Activated CD4-positive, alpha-beta T cell treated with anti-CD3 and anti-CD28 coated beads for 36 hours (primary cell): ENCODE measurements at regions of chr6 and their contacts with region 1.

Region 1: DNA sequence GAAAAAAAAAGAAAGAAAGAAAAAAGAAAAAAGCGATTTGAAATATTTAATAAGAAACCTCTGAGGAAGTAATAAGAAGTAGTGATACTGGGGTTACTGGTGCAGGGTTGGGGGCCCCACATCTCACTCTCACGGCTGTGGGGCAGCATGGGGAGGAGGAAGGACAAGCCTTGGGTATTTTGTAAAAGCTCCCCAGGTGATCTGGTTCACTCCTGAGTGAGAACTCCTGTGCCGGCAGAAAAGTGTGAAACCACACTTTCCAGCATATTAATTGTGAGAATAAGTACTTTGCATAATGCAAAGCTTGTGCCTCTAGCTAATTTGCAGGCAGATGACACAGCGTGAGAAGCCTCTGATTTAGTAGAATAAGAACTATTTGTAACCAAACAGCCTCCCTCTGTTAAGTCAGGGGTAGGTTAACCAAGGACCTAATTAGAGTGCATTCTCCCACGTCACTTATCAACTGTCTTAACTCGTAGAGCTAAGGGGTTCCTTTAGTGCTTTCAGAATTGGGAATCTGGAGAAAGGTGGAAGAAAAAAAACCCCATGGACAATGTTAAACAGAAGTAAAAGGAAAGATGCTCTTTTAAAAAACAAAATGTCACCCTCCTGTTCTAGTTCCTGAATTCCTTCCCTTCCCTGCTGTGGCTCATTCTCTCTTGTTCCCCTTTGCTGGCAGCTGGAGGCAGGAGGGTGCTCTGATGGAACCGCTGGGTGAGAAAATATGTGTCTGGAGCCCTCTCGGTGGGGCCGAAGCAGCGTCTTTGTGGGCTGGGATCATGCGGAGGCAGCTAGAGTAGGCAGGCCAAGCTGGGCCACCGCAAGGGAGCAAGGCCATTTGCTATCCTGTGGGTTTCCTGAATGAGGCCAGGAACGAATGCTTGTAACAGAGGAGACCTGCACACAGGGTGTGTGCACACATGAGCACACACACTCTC is 108.7 kb downstream of the FYN start:
- DNase-seq: peak; percentile 77
- ATAC-seq: peak; percentile 53
- H3K4me3 Mint-ChIP-seq: peak overlapping the region; percentile 68
- H3K27ac Mint-ChIP-seq: peak overlapping the region; percentile 99
- H3K4me1 Mint-ChIP-seq: peaks cover 99% of the 10 kb centered on the region
- H3K27me3 Mint-ChIP-seq: no peaks in the 10 kb centered on the region

Region 2: GRCh38 chr6:111642463-111643158 is 121.9 kb before region 1 on chr6:
- CTCF ChIA-PET with region 1: no interaction called
- POLR2A ChIA-PET with region 1: no interaction called
- intact Hi-C with region 1: no loop called
- DNase-seq: peak; percentile 67
- ATAC-seq: peak; percentile 80
- H3K4me3 Mint-ChIP-seq: no peak overlapping the region
- H3K27ac Mint-ChIP-seq: no peak overlapping the region
- H3K4me1 Mint-ChIP-seq: no peaks in the 10 kb centered on the region
- H3K27me3 Mint-ChIP-seq: no peaks in the 10 kb centered on the region

Region 3: GRCh38 chr6:111686249-111686931 is 78.1 kb before region 1 on chr6:
- CTCF ChIA-PET with region 1: no interaction called
- POLR2A ChIA-PET with region 1: interaction called, 10 read pairs
- intact Hi-C with region 1: no loop called
- DNase-seq: no peak
- ATAC-seq: no peak
- H3K4me3 Mint-ChIP-seq: no peak overlapping the region
- H3K27ac Mint-ChIP-seq: no peak overlapping the region
- H3K4me1 Mint-ChIP-seq: peaks cover 49% of the 10 kb centered on the region
- H3K27me3 Mint-ChIP-seq: no peaks in the 10 kb centered on the region

Region 4: GRCh38 chr6:111750753-111751684 is 13.5 kb before region 1 on chr6:
- CTCF ChIA-PET with region 1: interaction called, 18 read pairs
- POLR2A ChIA-PET with region 1: interaction called, 8 read pairs
- intact Hi-C with region 1: loop called in 1 of 2 experiments (anchors 1 kb)
- DNase-seq: peak; percentile 72
- ATAC-seq: peak; percentile 84
- H3K4me3 Mint-ChIP-seq: peak overlapping the region; percentile 52
- H3K27ac Mint-ChIP-seq: peak overlapping the region; percentile 90
- H3K4me1 Mint-ChIP-seq: peaks cover 92% of the 10 kb centered on the region
- H3K27me3 Mint-ChIP-seq: no peaks in the 10 kb centered on the region

Region 5: DNA sequence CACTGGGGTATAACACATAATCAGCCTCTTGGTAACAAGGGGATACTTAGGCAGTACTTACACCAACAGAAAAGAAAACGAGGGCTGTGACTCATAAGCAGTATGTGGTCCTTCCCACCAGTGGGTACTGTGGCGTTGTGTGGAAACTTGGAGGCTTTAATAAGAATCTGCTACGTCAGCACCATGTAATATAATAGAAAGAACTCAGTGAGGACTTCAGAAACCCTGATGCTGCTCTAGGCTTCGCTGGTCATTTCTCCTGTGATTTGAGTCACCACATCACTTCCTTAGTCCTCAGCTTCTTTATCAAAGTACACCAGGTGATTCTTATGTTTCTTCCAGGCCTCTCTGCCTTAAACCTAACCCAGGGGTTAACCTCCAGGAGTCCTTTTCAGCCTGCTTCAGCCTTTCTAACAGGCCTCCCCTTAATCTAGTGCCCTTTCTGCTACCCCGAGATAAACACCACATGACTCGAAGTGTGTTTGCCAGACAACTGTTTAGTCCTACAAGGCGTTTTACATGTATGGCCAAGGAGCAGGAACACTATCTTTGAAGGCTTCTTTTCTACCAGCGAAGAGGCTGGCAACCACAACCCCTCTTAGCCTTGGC is 40.2 kb after region 1 on chr6:
- CTCF ChIA-PET with region 1: interaction called, 10 read pairs
- POLR2A ChIA-PET with region 1: interaction called, 14 read pairs
- intact Hi-C with region 1: loop called (anchors 1 kb)
- DNase-seq: peak; percentile 83
- ATAC-seq: peak; percentile 62
- H3K4me3 Mint-ChIP-seq: peak overlapping the region; percentile 60
- H3K27ac Mint-ChIP-seq: peak overlapping the region; percentile 98
- H3K4me1 Mint-ChIP-seq: peaks cover 98% of the 10 kb centered on the region
- H3K27me3 Mint-ChIP-seq: no peaks in the 10 kb centered on the region

Region 6: GRCh38 chr6:111861431-111861885 is 97.0 kb after region 1 on chr6:
- CTCF ChIA-PET with region 1: interaction called, 6 read pairs
- POLR2A ChIA-PET with region 1: interaction called, 12 read pairs
- intact Hi-C with region 1: no loop called
- DNase-seq: peak; percentile 48
- ATAC-seq: peak; percentile 40
- H3K4me3 Mint-ChIP-seq: peak overlapping the region; percentile 20
- H3K27ac Mint-ChIP-seq: peak overlapping the region; percentile 91
- H3K4me1 Mint-ChIP-seq: peaks cover 100% of the 10 kb centered on the region
- H3K27me3 Mint-ChIP-seq: no peaks in the 10 kb centered on the region

Region 7: DNA sequence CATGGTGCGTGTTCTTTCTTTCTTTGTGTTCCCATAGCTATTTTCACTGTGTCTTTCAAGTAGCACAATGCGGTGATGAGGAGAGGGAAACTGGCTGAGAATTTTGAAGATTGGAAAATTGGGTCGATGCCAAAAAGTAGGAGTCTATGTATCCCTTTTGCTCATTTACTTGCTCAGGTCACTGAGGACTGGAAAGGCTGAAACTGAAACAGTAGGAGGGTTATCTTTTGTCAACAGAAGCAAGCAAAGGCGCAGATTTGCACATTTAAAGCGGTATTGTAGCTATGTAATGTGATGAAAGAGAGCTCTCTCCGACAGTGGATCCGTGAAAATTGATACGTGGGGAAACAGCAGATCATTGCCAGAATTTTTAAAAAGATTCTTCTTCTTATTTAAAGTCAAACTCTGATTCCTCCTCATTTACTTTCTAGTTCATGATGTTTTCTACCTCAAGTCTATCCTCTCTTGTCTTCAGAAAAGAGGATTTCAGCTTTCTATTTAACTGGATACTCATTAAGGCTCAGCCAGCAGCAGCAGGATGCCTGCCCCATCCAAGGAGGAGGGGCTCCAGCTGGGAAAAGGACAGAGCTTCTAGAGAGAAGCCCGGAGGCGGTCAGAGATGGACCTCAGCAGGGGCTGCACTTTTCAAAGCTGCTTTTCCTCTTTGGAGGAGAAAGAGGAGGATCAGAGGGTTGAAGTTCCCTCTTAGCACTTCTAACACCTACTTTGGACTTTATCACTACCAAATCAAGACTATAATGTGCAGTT is 124.6 kb after region 1 on chr6:
- CTCF ChIA-PET with region 1: no interaction called
- POLR2A ChIA-PET with region 1: no interaction called
- intact Hi-C with region 1: no loop called
- DNase-seq: no peak
- ATAC-seq: no peak
- H3K4me3 Mint-ChIP-seq: no peak overlapping the region
- H3K27ac Mint-ChIP-seq: no peak overlapping the region
- H3K4me1 Mint-ChIP-seq: peaks cover 2% of the 10 kb centered on the region
- H3K27me3 Mint-ChIP-seq: peaks cover 2% of the 10 kb centered on the region

Region 8: GRCh38 chr6:111997078-111997852 is 232.8 kb after region 1 on chr6:
- CTCF ChIA-PET with region 1: interaction called, 4 read pairs
- POLR2A ChIA-PET with region 1: no interaction called
- intact Hi-C with region 1: loop called (anchors 2 kb)
- DNase-seq: peak; percentile 89
- ATAC-seq: peak; percentile 71
- H3K4me3 Mint-ChIP-seq: peak overlapping the region; percentile 43
- H3K27ac Mint-ChIP-seq: peak overlapping the region; percentile 72
- H3K4me1 Mint-ChIP-seq: peaks cover 51% of the 10 kb centered on the region
- H3K27me3 Mint-ChIP-seq: no peaks in the 10 kb centered on the region